CD14-positive monocyte (primary cell): ENCODE measurements at regions of chr10 and their contacts with region 1.

Region 1: DNA sequence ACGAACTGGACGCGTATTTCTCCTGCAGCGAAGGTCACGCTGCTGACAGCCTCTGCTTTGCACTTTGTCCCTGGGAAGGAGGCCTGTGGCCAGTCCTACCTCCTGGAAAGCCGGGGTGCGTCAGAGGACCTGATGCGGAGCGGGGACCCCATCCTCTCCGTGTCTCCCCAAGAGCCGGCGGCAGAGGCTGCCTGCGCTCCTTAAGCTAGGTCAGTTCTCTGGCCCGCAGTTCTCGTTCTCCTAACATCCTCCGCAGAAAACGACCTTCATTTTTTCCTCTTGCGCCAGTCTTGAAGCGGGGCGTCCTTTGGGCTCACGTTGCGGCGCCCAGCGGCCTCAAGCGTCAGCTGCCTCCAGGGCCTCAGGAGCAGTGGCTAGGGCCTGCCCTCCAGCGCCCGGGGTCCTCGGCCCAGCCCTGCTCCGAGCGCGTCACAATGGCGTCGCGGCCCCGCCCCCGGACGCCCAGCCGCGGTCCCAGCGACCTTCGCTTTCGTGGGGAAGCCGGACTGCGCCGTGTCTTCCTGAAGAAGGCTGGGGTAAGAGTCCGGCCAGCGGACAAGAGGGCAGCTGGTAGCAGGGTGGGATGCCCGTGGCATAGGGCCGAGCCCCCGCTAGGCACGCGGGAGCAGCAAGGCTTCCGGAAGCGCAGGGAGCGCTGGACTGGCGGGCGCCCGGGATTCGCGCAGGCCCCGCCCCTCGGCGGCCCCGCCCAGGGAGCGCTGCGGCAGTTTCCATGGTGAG is at the start of gene ZNF487:
- DNase-seq: peak; percentile 89 to 94 (median 91)
- H3K4me3 ChIP-seq: peak within 1 kb of the TSS; percentile 46 to 92 (median 53)
- H3K4me3 Mint-ChIP-seq: peak within 1 kb of the TSS; percentile 91 to 94
- H3K27ac ChIP-seq: peak within 1 kb of the TSS; percentile 89 to 100
- H3K27ac Mint-ChIP-seq: peak within 1 kb of the TSS; percentile 98 to 100 (median 99)
- H3K4me1 ChIP-seq: peaks cover 65 to 74% of the 10 kb centered on the region in 2 donors
- H3K4me1 Mint-ChIP-seq: peaks cover 47% of the 10 kb centered on the region
- H3K27me3 ChIP-seq: no peaks in the 10 kb centered on the region
- H3K27me3 Mint-ChIP-seq: no peaks in the 10 kb centered on the region
- CTCF ChIP-seq: peak; percentile 24
- polyA plus RNA-seq, gene ZNF487: 8.6 to 19.7 (median 15.6) TPM

Region 2: DNA sequence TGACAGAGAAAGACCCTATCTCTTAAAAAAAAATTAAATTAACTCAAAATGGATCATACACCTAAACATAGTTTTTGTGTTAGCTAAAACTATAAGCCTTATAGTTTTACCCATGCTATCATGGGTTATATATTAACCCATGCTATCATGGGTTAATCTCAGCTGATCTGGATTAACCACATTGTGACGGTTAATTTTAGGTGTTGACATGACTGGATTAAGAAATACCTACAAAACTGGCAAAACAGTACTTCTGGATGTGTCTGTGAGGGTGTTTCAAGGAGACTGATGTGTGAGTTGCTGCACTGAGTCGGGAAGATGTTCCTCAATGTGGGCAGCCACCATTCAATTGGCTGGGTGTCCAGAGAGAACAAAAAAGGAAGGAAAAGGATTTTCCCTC is 109.4 kb before region 1 on chr10:
- intact Hi-C with region 1: no loop called
- DNase-seq: no peak
- H3K4me3 ChIP-seq: no peak overlapping the region
- H3K4me3 Mint-ChIP-seq: no peak overlapping the region
- H3K27ac ChIP-seq: no peak overlapping the region
- H3K27ac Mint-ChIP-seq: peak overlapping the region in 1 of 7 donors; percentile 7
- H3K4me1 ChIP-seq: peaks cover 28 to 30% of the 10 kb centered on the region in 2 donors
- H3K4me1 Mint-ChIP-seq: peaks cover 34% of the 10 kb centered on the region
- H3K27me3 ChIP-seq: no peaks in the 10 kb centered on the region
- H3K27me3 Mint-ChIP-seq: peaks cover 3 to 7% (median 4%) of the 10 kb centered on the region in 3 donors
- CTCF ChIP-seq: no peak

Region 3: DNA sequence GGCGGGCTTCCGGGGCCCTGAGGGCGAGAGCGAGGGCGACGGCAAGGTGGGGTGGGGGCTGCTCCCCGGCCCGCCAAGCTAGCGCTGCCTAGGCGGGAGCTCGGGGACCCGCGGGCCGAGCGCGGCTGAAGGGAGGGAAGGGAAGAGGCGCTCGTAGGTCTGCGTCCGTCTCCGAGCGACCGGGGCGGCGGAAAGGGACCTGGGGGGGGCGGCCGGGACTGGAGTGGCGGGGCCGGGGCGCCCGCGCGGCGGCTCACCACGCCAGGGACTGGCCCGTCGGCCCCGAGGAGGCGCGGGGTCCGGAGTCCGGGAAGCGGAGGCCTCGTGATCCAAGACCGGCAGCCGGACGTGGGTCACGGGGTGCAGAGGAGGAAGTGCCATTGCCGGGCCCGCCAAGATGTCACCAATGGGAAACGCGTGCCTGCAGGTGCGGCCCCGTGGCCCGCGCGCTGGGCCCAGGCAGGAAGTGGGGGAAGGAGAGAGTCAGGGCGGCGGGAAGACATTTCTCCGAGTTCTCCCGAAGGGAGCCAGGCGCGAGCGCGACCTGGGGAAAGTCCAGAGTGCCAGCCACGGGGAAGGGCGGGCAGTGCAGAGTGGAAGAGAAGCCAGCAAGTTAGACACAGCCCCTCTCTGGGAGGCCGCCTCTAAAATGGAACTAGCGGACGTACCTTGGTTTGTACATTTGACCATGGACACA is 39.5 kb before region 1 on chr10:
- intact Hi-C with region 1: loop called in 1 of 2 experiments (anchors 5 kb)
- DNase-seq: peak; percentile 84 to 92 (median 86)
- H3K4me3 ChIP-seq: peak overlapping the region; percentile 42 to 76 (median 60)
- H3K4me3 Mint-ChIP-seq: peak overlapping the region; percentile 88 to 95
- H3K27ac ChIP-seq: peak overlapping the region; percentile 92 to 99
- H3K27ac Mint-ChIP-seq: peak overlapping the region; percentile 95 to 99 (median 96)
- H3K4me1 ChIP-seq: peaks cover 48 to 81% of the 10 kb centered on the region in 2 donors
- H3K4me1 Mint-ChIP-seq: peaks cover 74% of the 10 kb centered on the region
- H3K27me3 ChIP-seq: no peaks in the 10 kb centered on the region
- H3K27me3 Mint-ChIP-seq: peaks cover 0 to 3% (median 0%) of the 10 kb centered on the region in 3 donors
- CTCF ChIP-seq: no peak

Region 4: GRCh38 chr10:43420369-43421200 is 16.0 kb before region 1 on chr10:
- intact Hi-C with region 1: loop called (anchors 2 kb)
- DNase-seq: peak; percentile 79 to 83 (median 83)
- H3K4me3 ChIP-seq: peak overlapping the region; percentile 52 to 71 (median 56)
- H3K4me3 Mint-ChIP-seq: peak overlapping the region; percentile 93
- H3K27ac ChIP-seq: peak overlapping the region; percentile 95 to 96
- H3K27ac Mint-ChIP-seq: peak overlapping the region; percentile 97 to 99 (median 99)
- H3K4me1 ChIP-seq: peaks cover 48 to 52% of the 10 kb centered on the region in 2 donors
- H3K4me1 Mint-ChIP-seq: peaks cover 42% of the 10 kb centered on the region
- H3K27me3 ChIP-seq: no peaks in the 10 kb centered on the region
- H3K27me3 Mint-ChIP-seq: peaks cover 0 to 3% (median 0%) of the 10 kb centered on the region in 3 donors
- CTCF ChIP-seq: no peak

Region 5: DNA sequence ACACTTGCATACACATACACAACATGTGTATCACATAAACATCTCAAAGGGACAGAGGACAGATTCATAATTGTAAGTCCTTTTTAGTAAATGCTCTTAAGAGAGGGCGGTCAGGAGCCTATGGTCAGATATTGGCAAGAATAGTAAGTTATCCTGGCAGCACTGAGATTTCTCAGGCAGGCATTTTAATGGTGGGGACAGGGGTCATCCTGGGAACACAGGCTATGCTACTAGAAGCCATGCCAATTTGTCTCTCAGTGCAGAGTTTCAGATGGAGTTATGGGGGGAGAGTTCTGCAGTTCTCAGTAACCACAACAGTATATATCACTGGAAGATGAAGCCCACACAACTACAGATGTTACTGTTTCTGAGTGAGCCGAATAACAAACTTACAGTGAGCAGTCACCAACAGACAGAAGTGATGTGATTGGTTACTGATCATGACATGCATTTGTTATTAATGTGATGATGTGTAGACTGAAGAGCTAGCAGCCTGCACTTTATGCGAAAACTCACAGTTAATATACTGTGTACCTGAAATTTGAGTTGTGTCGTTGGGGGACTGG is 16.8 kb after region 1 on chr10:
- intact Hi-C with region 1: loop called in 1 of 2 experiments (anchors 2 kb)
- DNase-seq: no peak
- H3K4me3 ChIP-seq: no peak overlapping the region
- H3K4me3 Mint-ChIP-seq: no peak overlapping the region
- H3K27ac ChIP-seq: peak overlapping the region in 1 of 2 donors; percentile 83
- H3K27ac Mint-ChIP-seq: peak overlapping the region in 5 of 7 donors; percentile 88 to 97 (median 95)
- H3K4me1 ChIP-seq: peaks cover 46 to 56% of the 10 kb centered on the region in 2 donors
- H3K4me1 Mint-ChIP-seq: peaks cover 40% of the 10 kb centered on the region
- H3K27me3 ChIP-seq: no peaks in the 10 kb centered on the region
- H3K27me3 Mint-ChIP-seq: no peaks in the 10 kb centered on the region
- CTCF ChIP-seq: no peak

Region 6: GRCh38 chr10:43846187-43846680 is 409.7 kb after region 1 on chr10:
- intact Hi-C with region 1: no loop called
- DNase-seq: no peak
- H3K4me3 ChIP-seq: no peak overlapping the region
- H3K4me3 Mint-ChIP-seq: peak overlapping the region in 1 of 2 donors; percentile 64
- H3K27ac ChIP-seq: no peak overlapping the region
- H3K27ac Mint-ChIP-seq: no peak overlapping the region
- H3K4me1 ChIP-seq: peaks cover 0 to 4% of the 10 kb centered on the region in 2 donors
- H3K4me1 Mint-ChIP-seq: peaks cover 6% of the 10 kb centered on the region
- H3K27me3 ChIP-seq: no peaks in the 10 kb centered on the region
- H3K27me3 Mint-ChIP-seq: peaks cover 4 to 9% (median 8%) of the 10 kb centered on the region in 3 donors
- CTCF ChIP-seq: no peak